Activated CD4-positive, alpha-beta memory T cell treated with anti-CD3 and anti-CD28 coated beads for 36 hours (primary cell): ENCODE measurements at regions of chr19 and their contacts with region 1.

Region 1: GRCh38 chr19:27793644-27794493 is 1419.1 kb downstream of the UQCRFS1 start:
- DNase-seq: peak; percentile 94
- H3K4me3 Mint-ChIP-seq: peak overlapping the region; percentile 94
- H3K27ac Mint-ChIP-seq: peak overlapping the region; percentile 89
- H3K4me1 Mint-ChIP-seq: peaks cover 16% of the 10 kb centered on the region
- H3K27me3 Mint-ChIP-seq: no peaks in the 10 kb centered on the region

Region 2: DNA sequence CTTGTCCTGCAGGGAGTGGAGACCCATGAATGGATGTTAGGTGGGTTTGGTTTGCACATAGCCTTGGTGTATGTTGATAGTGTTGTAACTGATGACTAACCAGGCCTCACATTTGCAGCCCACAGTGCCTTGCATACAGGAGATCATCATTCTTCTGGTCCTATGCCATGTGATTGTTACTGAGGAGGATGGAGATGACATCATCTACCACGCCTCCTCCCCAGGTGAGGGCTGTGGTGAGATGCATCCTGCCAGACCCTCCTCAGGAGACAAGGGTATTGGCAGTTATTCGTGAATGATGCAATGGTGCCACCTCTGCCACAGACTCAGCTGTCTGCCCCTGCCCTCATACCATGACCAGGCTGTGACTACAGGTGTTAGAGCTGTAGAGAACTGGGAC is 125.0 kb after region 1 on chr19:
- CTCF ChIA-PET with region 1: no interaction called
- POLR2A ChIA-PET with region 1: no interaction called
- intact Hi-C with region 1: no loop called
- DNase-seq: no peak
- H3K4me3 Mint-ChIP-seq: no peak overlapping the region
- H3K27ac Mint-ChIP-seq: no peak overlapping the region
- H3K4me1 Mint-ChIP-seq: no peaks in the 10 kb centered on the region
- H3K27me3 Mint-ChIP-seq: no peaks in the 10 kb centered on the region

Region 3: DNA sequence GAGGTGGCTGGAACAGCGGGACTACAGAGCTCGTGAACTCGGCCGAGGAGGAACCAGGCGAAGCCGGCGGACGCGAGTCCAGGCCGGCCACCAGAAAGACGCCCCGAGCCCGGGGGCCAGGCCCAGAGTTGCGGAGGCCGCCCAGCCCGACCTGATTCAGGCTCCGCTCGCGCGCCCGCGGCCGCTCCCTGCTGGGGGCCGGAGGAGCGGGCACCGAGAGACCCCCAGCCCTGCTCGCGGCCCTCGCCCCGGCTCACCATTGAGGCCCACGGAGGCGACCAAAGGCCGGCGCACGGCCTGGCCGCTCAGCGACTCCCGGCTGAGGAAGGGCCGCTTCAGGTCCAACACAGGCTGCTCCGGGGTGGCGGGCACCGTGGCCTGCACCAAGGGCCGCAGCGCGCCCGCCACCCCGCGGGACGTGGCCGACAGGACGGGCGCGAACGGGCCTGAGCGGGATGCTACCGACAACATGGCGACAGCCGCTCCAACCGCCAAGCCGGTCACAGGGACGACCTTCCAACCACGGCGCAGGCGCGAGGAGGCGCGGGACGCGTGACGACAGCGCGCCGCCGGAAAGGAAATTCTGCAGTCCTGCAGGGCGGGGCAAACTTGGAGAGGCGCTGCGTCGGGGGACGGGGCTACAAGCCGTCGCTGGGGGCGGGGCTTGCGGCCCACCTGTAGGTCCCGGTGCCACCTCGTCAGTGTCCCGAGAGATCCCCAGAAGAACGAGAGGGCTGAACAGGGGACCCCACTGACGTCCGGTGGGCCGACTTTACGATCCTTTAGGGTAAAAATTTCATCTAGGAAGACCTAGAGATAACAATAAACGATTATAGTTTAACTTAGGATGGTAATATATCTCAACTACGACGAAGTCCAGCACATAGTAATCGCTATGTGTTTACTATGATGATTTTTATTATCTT is 1419.0 kb after region 1 on chr19 and contains the start of gene UQCRFS1:
- CTCF ChIA-PET with region 1: no interaction called
- POLR2A ChIA-PET with region 1: no interaction called
- intact Hi-C with region 1: loop called (anchors 2 kb)
- DNase-seq: peak; percentile 98
- H3K4me3 Mint-ChIP-seq: peak within 1 kb of the TSS; percentile 95
- H3K27ac Mint-ChIP-seq: peak within 1 kb of the TSS; percentile 94
- H3K4me1 Mint-ChIP-seq: peaks cover 42% of the 10 kb centered on the region
- H3K27me3 Mint-ChIP-seq: peaks cover 2% of the 10 kb centered on the region
- total RNA-seq, gene UQCRFS1: 42.0 to 43.9 TPM